CD4-positive, alpha-beta memory T cell (primary cell): ENCODE measurements at regions of chr1 and their contacts with region 1.

Region 1: DNA sequence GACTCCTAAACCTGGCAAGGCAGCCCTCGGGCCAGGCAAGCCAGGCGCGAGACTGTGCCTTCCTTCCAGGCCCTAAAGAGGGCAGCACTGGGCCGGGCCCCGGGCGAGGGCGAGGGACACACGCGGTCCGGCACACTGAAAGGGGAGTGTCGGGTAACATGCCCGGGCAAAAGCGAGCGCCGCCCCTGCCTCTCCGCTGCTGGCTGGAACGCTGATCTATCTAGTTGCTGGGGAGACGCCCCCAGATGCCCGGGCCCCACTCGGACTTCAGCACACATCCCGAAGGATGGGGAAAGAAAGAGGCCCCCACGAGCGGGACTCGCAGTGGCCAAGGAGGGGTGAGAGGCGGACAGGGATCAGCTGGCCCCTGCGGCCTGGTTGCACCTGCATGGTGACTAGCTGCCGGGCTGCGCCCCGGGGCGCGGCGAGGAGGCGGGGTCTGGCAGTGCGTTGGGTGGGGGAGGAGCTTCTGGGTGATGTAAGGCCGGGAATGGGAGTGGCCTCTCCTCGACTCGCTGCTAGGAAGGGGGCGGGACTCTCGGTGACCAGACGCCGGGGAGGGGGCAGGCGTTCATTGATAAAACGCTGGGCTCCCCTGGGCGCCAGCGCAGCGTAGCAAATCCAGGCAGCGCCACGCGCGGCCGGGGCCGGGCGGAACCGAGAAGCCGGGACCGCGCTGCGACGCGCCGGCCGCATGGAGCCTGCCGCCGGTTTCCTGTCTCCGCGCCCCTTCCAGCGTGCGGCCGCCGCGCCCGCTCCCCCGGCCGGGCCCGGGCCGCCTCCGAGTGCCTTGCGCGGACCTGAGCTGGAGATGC is at the start of gene PLK3:
- DNase-seq: peak; percentile 99 to 100 (median 99)
- H3K4me3 ChIP-seq: peak within 1 kb of the TSS; percentile 77 to 83
- H3K4me3 Mint-ChIP-seq: peak within 1 kb of the TSS; percentile 89 to 99 (median 96)
- H3K27ac ChIP-seq: peak within 1 kb of the TSS; percentile 96
- H3K27ac Mint-ChIP-seq: peak within 1 kb of the TSS; percentile 82 to 100 (median 99)
- H3K4me1 ChIP-seq: peaks cover 37% of the 10 kb centered on the region
- H3K4me1 Mint-ChIP-seq: peaks cover 23 to 48% (median 31%) of the 10 kb centered on the region in 4 donors
- H3K27me3 ChIP-seq: no peaks in the 10 kb centered on the region
- H3K27me3 Mint-ChIP-seq: no peaks in the 10 kb centered on the region
- total RNA-seq, gene PLK3: 151 to 153 TPM

Region 2: DNA sequence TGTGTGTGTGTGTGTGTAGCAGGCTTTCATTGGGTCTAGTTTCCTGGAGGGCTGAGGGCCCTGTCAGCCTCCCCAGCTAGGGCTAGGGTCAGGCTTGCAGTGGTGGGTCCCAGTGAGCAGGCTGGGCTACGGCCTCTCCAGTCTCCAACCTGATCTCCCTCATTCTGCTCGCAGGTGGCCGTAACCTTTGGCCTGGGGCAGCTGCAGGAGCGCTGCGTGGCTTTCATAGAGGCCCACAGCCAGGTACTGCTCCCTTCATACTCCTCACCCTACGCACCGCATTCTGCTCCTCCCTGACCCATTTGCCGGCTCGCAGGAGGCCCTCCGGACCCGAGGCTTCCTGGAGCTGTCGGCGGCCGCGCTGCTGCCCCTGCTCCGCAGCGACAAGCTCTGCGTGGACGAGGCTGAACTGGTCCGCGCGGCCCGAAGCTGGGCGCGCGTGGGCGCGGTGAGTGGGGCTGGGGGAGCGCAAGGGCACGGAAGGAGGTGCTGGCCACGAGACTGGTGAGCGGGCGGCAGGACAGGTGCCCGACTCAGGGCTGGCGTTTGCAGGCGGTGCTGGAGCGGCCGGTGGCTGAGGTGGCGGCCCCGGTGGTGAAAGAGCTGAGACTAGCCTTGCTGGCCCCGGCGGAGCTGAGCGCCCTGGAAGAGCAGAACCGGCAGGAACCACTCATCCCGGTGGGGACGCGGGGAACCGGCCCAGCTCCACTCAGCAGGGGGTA is 13.0 kb after region 1 on chr1:
- CTCF ChIA-PET with region 1: interaction called, 174 read pairs
- POLR2A ChIA-PET with region 1: interaction called, 1,564 read pairs
- intact Hi-C with region 1: loop called (anchors 1 kb)
- DNase-seq: no peak
- H3K4me3 ChIP-seq: peak overlapping the region in 1 of 2 donors; percentile 54
- H3K4me3 Mint-ChIP-seq: peak overlapping the region; percentile 21 to 93 (median 64)
- H3K27ac ChIP-seq: peak overlapping the region; percentile 64
- H3K27ac Mint-ChIP-seq: peak overlapping the region; percentile 82 to 100 (median 99)
- H3K4me1 ChIP-seq: peaks cover 68% of the 10 kb centered on the region
- H3K4me1 Mint-ChIP-seq: peaks cover 43 to 80% (median 62%) of the 10 kb centered on the region in 4 donors
- H3K27me3 ChIP-seq: no peaks in the 10 kb centered on the region
- H3K27me3 Mint-ChIP-seq: no peaks in the 10 kb centered on the region

Region 3: GRCh38 chr1:44835738-44836675 is 36.0 kb after region 1 on chr1:
- CTCF ChIA-PET with region 1: interaction called, 6 read pairs
- POLR2A ChIA-PET with region 1: interaction called, 11 read pairs
- intact Hi-C with region 1: loop called (anchors 2 kb)
- DNase-seq: peak; percentile 71 to 83 (median 75)
- H3K4me3 ChIP-seq: no peak overlapping the region
- H3K4me3 Mint-ChIP-seq: peak overlapping the region in 4 of 8 donors; percentile 19 to 69 (median 42)
- H3K27ac ChIP-seq: no peak overlapping the region
- H3K27ac Mint-ChIP-seq: peak overlapping the region in 6 of 7 donors; percentile 7 to 74 (median 58)
- H3K4me1 ChIP-seq: peaks cover 4% of the 10 kb centered on the region
- H3K4me1 Mint-ChIP-seq: peaks cover 5 to 9% (median 8%) of the 10 kb centered on the region in 4 donors
- H3K27me3 ChIP-seq: no peaks in the 10 kb centered on the region
- H3K27me3 Mint-ChIP-seq: peaks cover 5 to 10% of the 10 kb centered on the region in 2 donors

Region 4: GRCh38 chr1:44862829-44863401 is 62.9 kb after region 1 on chr1:
- CTCF ChIA-PET with region 1: no interaction called
- POLR2A ChIA-PET with region 1: no interaction called
- intact Hi-C with region 1: no loop called
- DNase-seq: no peak
- H3K4me3 ChIP-seq: no peak overlapping the region
- H3K4me3 Mint-ChIP-seq: no peak overlapping the region
- H3K27ac ChIP-seq: no peak overlapping the region
- H3K27ac Mint-ChIP-seq: peak overlapping the region in 1 of 7 donors; percentile 60
- H3K4me1 ChIP-seq: no peaks in the 10 kb centered on the region
- H3K4me1 Mint-ChIP-seq: no peaks in the 10 kb centered on the region
- H3K27me3 ChIP-seq: no peaks in the 10 kb centered on the region
- H3K27me3 Mint-ChIP-seq: no peaks in the 10 kb centered on the region